ENCODE measurements at regions of chr2 and their contacts with region 1.

Region 1: GRCh38 chr2:56183643-56184499 is at the start of gene CCDC85A:
- H3K4me3 ChIP-seq: peak within 1 kb of the TSS; percentile 57
- H3K27ac ChIP-seq: peak within 1 kb of the TSS; percentile 46; the same call in 1 of the 2 replicates
- H3K4me1 ChIP-seq: no peaks in the 10 kb centered on the region
- CTCF ChIP-seq: peak; percentile 96

Region 2: DNA sequence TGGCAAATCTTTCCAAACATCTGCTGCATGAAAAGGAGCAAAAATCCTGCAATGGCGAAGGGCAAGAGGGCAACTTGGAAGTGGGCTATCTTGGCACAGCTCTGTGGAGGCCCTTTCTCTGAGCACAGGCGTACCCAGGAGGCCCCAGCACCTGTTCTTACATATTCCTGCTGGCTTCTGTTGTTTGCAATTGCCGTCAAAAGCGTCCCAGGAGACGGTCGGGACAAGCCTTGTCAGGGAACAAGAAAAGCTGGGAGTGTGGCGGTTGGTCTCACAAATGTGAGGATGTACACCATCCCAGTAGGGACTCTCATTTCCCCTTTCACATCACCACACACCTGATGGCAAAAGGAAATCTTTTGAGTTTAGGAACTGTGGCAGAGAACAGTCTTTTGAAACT is 165.6 kb before region 1 on chr2:
- CTCF ChIA-PET with region 1: no interaction called
- POLR2A ChIA-PET with region 1: no interaction called
- H3K4me3 ChIP-seq: no peak overlapping the region
- H3K27ac ChIP-seq: no peak overlapping the region
- H3K4me1 ChIP-seq: peaks cover 8% of the 10 kb centered on the region
- CTCF ChIP-seq: no peak

Region 3: DNA sequence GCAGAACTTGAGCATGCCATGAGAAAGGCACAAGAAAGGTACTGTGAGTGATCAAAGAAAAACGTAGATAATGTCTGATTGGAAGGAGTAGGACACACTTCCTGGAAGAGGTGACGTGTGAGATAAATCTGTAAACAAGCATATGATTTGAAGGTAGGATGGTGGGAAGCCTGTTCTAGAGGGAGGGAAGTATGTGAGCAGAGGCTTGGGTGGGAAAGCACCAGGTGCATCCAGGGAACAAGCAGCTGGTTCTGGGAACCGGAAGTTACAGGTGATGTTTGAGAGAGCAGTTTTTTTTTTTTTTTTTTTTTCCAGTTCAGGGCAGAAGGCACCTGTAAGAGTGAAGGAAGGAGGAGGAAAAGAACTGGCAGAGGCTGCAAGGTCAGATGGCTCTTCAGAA is 143.7 kb before region 1 on chr2:
- CTCF ChIA-PET with region 1: no interaction called
- POLR2A ChIA-PET with region 1: no interaction called
- H3K4me3 ChIP-seq: no peak overlapping the region
- H3K27ac ChIP-seq: no peak overlapping the region
- H3K4me1 ChIP-seq: no peaks in the 10 kb centered on the region
- CTCF ChIP-seq: no peak

Region 4: DNA sequence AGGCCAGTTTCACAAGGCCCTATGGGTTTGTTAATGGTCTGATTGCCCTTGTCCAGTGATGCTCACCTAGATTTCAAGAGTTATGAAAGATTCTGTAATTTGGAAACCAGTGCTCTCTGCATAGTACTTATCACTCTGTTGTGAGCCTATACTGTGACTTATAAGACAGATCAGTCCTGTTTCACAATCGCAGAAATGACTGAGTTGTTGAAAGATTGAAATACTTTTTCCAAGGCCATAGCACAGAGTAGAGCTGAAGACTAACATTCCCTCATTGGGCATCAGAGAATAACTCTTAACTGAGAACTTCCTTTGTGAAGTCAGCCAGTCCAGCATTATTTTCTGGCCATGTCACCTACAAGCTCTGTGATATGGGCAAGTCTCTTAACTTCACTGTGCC is 43.9 kb after region 1 on chr2:
- CTCF ChIA-PET with region 1: no interaction called
- POLR2A ChIA-PET with region 1: no interaction called
- H3K4me3 ChIP-seq: no peak overlapping the region
- H3K27ac ChIP-seq: no peak overlapping the region
- H3K4me1 ChIP-seq: peaks cover 7% of the 10 kb centered on the region; the same call in 1 of the 2 replicates
- CTCF ChIP-seq: no peak

Region 5: GRCh38 chr2:57497489-57498096 is 1313.7 kb after region 1 on chr2:
- CTCF ChIA-PET with region 1: interaction called, 17 read pairs
- POLR2A ChIA-PET with region 1: no interaction called
- H3K4me3 ChIP-seq: no peak overlapping the region
- H3K27ac ChIP-seq: no peak overlapping the region
- H3K4me1 ChIP-seq: no peaks in the 10 kb centered on the region
- CTCF ChIP-seq: 0 out of 2 replicates have a peak, but pooled peaks have one; percentile 40

Measured in HEK293 (cell line).